Natural killer cell (primary cell): ENCODE measurements at regions of chr21 and their contacts with region 1.

Region 1: GRCh38 chr21:15064576-15065391 is at the start of gene NRIP1:
- DNase-seq: peak; percentile 86 to 89
- ATAC-seq: peak; percentile 79 to 91 (median 84)
- H3K4me3 ChIP-seq: peak within 1 kb of the TSS; percentile 87
- H3K4me3 Mint-ChIP-seq: peak within 1 kb of the TSS; percentile 96
- H3K27ac ChIP-seq: peak within 1 kb of the TSS; percentile 91
- H3K27ac Mint-ChIP-seq: peak within 1 kb of the TSS; percentile 90 to 96
- H3K4me1 ChIP-seq: peaks cover 10% of the 10 kb centered on the region
- H3K4me1 Mint-ChIP-seq: peaks cover 40 to 45% of the 10 kb centered on the region in 2 donors
- H3K27me3 ChIP-seq: no peaks in the 10 kb centered on the region
- H3K27me3 Mint-ChIP-seq: no peaks in the 10 kb centered on the region
- CTCF ChIP-seq: no peak
- total RNA-seq, gene NRIP1: 42.4 to 46.8 (median 42.6) TPM

Region 2: GRCh38 chr21:14382835-14383594 is 681.8 kb before region 1 on chr21 and contains the start of gene HSPA13:
- intact Hi-C with region 1: loop called (anchors 1 kb)
- DNase-seq: peak; percentile 97 to 99
- ATAC-seq: peak; percentile 92 to 99 (median 94)
- H3K4me3 ChIP-seq: peak within 1 kb of the TSS; percentile 66
- H3K4me3 Mint-ChIP-seq: peak within 1 kb of the TSS; percentile 100
- H3K27ac ChIP-seq: peak within 1 kb of the TSS; percentile 91
- H3K27ac Mint-ChIP-seq: peak within 1 kb of the TSS; percentile 100
- H3K4me1 ChIP-seq: no peaks in the 10 kb centered on the region
- H3K4me1 Mint-ChIP-seq: peaks cover 25 to 26% of the 10 kb centered on the region in 2 donors
- H3K27me3 ChIP-seq: no peaks in the 10 kb centered on the region
- H3K27me3 Mint-ChIP-seq: no peaks in the 10 kb centered on the region
- CTCF ChIP-seq: no peak
- total RNA-seq, gene HSPA13: 17.0 to 23.8 (median 22.7) TPM

Region 3: DNA sequence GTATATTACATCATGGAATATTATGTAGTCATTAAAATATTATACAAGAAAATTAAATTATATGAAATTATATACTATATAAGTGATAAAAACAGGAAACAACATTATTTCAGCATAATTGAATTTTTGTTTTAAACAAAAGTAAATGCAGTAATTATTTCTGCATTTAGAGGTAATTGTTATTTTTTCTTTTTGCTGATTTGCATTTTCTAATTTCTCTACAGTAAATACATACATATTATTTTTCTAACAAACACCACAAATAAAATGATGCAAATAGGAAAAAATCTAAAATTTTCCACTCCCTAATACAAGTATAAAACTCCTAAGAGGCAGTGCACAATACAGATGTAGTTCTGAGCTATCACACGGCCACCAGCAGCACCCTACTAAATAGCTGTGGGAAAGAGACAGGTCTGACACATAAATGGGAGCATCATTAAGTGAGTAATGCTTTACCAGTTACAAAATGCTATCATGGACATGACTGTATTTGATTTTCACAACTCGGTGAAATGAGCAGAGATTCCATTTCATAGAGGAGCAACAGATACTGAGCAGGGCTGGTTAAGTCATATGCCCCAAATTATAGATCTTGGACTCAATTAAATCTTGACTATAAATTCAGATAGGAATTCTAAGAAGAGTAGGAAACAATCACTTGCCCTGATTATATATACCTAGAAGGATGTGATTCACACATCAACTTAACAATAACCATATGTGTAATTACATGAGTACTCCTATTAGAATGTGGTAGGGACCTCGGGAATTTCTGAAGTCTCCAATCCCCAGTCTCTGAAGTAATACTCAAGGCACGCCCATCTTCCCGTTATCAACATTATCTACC is 48.9 kb before region 1 on chr21:
- intact Hi-C with region 1: no loop called
- DNase-seq: no peak
- ATAC-seq: no peak
- H3K4me3 ChIP-seq: no peak overlapping the region
- H3K4me3 Mint-ChIP-seq: no peak overlapping the region
- H3K27ac ChIP-seq: no peak overlapping the region
- H3K27ac Mint-ChIP-seq: no peak overlapping the region
- H3K4me1 ChIP-seq: no peaks in the 10 kb centered on the region
- H3K4me1 Mint-ChIP-seq: peaks cover 13 to 23% of the 10 kb centered on the region in 2 donors
- H3K27me3 ChIP-seq: no peaks in the 10 kb centered on the region
- H3K27me3 Mint-ChIP-seq: no peaks in the 10 kb centered on the region
- CTCF ChIP-seq: no peak

Region 4: DNA sequence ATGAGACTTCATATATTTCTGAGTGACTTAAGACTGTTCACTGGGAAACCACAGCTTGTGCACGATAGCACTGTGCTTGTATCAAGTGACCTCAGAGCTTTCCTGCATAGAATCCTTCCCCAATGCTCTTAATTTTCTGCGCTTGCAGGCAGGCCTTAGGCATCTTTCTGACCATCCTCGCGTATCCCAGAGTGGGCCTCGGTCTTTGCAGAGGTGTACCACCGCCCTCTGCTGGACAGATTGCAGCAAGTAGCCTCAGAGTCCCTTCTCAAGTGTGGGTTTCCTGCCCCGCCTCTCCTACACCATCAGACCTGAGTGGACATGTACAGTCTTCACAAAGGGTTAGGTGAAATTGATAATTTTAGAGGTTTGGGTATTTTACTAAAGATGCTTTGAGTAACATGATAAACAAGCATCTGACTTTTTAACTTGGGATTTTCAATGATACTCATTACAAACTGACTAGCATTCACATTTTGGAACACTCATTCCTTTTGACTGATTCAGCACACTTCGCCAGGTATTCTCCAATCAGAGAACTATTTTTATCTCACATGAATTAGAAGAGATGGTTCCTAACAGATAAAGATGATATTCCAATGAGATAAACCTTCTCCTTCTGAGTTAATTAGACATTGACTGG is 418.5 kb after region 1 on chr21:
- intact Hi-C with region 1: loop called (anchors 2 kb)
- DNase-seq: peak; percentile 68 to 87
- ATAC-seq: peak; percentile 95 to 100 (median 100)
- H3K4me3 ChIP-seq: no peak overlapping the region
- H3K4me3 Mint-ChIP-seq: no peak overlapping the region
- H3K27ac ChIP-seq: no peak overlapping the region
- H3K27ac Mint-ChIP-seq: no peak overlapping the region
- H3K4me1 ChIP-seq: no peaks in the 10 kb centered on the region
- H3K4me1 Mint-ChIP-seq: peaks cover 5 to 6% of the 10 kb centered on the region in 2 donors
- H3K27me3 ChIP-seq: no peaks in the 10 kb centered on the region
- H3K27me3 Mint-ChIP-seq: no peaks in the 10 kb centered on the region
- CTCF ChIP-seq: peak; percentile 84

Region 5: GRCh38 chr21:15592271-15592860 is 527.6 kb after region 1 on chr21:
- intact Hi-C with region 1: loop called (anchors 10 kb)
- DNase-seq: peak in 1 of 2 donors; percentile 68
- ATAC-seq: peak in 1 of 3 donors; percentile 57
- H3K4me3 ChIP-seq: no peak overlapping the region
- H3K4me3 Mint-ChIP-seq: no peak overlapping the region
- H3K27ac ChIP-seq: no peak overlapping the region
- H3K27ac Mint-ChIP-seq: no peak overlapping the region
- H3K4me1 ChIP-seq: no peaks in the 10 kb centered on the region
- H3K4me1 Mint-ChIP-seq: no peaks in the 10 kb centered on the region
- H3K27me3 ChIP-seq: no peaks in the 10 kb centered on the region
- H3K27me3 Mint-ChIP-seq: peaks cover 0 to 27% of the 10 kb centered on the region in 2 donors
- CTCF ChIP-seq: peak; percentile 78